Cardiac septum (tissue), 1 donor: ENCODE measurements at regions of chr15 and their contacts with region 1.

Region 1: DNA sequence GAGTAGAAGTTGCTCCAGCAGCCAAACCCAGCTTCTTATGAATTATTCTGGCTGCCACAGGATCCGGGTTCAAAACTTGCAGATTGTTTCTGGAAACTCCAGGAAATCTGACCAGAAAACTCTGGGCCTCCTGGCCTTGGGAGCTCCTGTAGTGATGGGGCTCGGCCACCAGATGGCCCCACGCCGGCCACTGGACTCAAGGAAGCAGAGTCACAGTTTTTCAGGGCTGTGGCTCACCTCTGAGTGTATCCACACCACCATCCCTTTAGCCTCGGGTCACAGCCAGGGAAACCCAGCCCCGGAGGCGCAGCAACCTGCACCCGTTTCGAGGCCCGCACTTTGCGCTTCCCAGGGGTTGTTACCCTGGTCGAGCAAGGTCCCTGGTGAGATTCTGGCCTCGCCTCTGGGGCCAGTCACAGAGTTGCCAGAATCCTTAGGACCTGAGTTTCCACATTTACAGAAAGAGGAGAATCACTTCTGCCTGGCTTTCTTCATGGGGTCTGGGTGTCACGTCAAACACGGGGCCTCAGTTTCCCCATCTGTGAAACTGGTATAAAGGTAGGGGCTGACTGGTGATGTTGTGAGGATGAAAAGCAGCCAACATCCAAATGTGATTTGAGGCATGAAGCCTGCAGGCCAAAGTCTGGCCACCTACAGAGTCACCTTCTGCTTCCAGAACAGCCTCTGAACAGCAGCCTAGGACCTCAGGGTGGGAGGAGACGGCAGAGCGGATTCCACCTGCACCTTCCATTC is 53.5 kb upstream of the LCTL start:
- DNase-seq: peak; percentile 86

Region 2: GRCh38 chr15:66661432-66662096 is 42.2 kb after region 1 on chr15:
- intact Hi-C with region 1: loop called (anchors 5 kb)
- DNase-seq: peak; percentile 82

Region 3: GRCh38 chr15:66774001-66774814 is 154.9 kb after region 1 on chr15:
- intact Hi-C with region 1: loop called (anchors 2 kb)
- DNase-seq: peak; percentile 92